Head of caudate nucleus (tissue), 42 donors: ENCODE measurements at regions of chr11 and their contacts with region 1.

Region 1: GRCh38 chr11:119666463-119667131 is 62.4 kb downstream of the NECTIN1 start:
- DNase-seq: peak; percentile 54 to 95 (median 88)

Region 2: GRCh38 chr11:119421941-119422808 is 244.4 kb before region 1 on chr11:
- intact Hi-C with region 1: no loop called
- DNase-seq: peak; percentile 58 to 88 (median 75)

Region 3: GRCh38 chr11:119878990-119879389 is 212.4 kb after region 1 on chr11:
- intact Hi-C with region 1: loop called (anchors 5 kb)
- DNase-seq: peak in 27 of 42 donors; percentile 15 to 70 (median 43)

Region 4: DNA sequence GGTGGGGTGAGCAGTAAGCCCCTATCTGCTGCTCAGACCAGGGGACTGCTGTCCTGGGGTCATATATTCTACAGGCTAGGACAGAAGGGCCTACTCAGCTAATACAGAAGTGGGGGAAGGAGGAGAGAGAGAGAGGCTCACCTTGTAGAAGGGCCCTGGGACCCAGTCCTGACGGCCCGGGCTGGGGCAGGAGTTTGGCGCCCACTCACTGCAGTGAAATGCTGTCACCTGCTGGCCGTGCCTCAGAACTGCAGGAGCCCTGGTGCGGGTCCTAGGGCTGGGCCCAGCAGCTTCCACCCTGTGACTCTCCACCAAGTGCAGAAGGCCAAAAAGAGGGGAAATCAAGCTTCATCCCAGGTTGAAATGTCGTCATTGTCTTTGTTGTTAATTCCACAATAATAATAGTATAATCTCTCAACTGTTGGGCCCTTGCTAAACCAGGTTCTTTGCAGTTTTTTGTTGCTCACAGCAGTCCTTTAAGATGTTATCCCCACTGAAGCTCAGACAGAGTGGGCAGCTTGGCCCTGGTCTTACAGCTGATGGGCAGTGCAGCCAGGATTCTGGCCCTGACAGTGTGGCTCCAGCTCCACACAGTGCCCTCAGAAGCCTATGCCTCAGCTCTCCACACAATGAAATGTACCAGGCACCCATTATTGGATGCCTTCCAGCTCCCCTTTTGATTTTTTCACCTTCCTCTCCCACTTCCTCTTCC is 441.7 kb after region 1 on chr11:
- intact Hi-C with region 1: loop called (anchors 2 kb)
- DNase-seq: peak; percentile 69 to 96 (median 88)